ENCODE measurements at regions of chr10 and their contacts with region 1.

Region 1: DNA sequence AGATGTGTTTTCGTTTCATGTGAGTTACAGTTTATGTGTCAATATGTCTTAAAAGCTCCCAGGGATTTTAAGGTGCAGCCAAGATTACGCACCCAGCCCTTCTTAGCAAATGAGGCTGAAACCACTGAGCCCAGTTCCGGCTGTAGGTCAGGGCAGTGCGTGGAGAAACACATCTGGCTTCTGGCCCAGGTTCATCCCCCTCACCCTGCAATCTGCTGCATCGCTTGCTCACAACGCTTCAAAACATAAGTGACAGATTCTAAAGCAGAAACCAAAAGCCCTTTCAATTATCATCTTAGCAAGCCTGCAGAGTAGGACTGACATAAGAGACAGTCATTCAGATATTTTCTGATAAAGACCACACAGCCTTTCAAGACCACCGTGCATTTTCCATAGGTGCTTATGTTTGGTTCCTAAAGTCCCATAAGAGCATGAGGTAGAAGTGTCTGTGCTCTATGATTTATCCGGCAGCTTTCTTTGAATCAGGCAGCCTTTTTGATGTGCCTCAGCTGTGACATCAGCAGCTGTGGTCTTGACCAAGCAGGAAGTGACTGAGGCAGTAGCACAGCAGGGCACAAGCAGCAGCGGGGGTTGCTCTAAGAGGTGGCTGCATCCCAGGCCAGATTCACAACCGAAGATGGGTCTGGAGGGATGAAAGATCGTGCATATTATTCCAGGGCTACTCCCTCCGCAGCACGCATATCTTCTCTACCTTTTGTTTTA is 72.1 kb upstream of the LYZL2 start:
- DNase-seq: peak; percentile 94
- H3K4me3 Mint-ChIP-seq: peak overlapping the region; percentile 57
- H3K27ac Mint-ChIP-seq: peak overlapping the region; percentile 98
- H3K4me1 Mint-ChIP-seq: peaks cover 90% of the 10 kb centered on the region
- H3K27me3 Mint-ChIP-seq: no peaks in the 10 kb centered on the region

Region 2: DNA sequence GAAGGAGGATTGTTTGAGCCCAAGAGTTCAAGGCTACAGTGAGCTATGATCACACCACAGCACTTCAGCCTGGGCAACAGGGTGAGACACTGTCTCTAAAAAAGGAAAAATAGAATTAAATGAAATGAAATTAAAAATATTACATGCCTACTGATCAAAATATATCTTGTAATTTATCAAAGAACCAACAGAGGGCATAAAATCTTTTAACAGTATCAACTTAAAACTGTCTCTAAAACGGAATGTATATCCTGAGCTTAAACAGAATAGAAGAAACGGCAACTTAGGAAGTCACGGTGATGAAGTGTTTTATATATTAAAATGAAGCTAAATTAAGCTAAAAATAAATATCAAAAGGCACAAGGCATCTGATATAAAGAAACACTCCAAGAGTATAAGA is 431.4 kb before region 1 on chr10:
- CTCF ChIA-PET with region 1: no interaction called
- POLR2A ChIA-PET with region 1: no interaction called
- intact Hi-C with region 1: no loop called
- DNase-seq: no peak
- H3K4me3 Mint-ChIP-seq: no peak overlapping the region
- H3K27ac Mint-ChIP-seq: no peak overlapping the region
- H3K4me1 Mint-ChIP-seq: no peaks in the 10 kb centered on the region
- H3K27me3 Mint-ChIP-seq: peaks cover 15% of the 10 kb centered on the region

Region 3: DNA sequence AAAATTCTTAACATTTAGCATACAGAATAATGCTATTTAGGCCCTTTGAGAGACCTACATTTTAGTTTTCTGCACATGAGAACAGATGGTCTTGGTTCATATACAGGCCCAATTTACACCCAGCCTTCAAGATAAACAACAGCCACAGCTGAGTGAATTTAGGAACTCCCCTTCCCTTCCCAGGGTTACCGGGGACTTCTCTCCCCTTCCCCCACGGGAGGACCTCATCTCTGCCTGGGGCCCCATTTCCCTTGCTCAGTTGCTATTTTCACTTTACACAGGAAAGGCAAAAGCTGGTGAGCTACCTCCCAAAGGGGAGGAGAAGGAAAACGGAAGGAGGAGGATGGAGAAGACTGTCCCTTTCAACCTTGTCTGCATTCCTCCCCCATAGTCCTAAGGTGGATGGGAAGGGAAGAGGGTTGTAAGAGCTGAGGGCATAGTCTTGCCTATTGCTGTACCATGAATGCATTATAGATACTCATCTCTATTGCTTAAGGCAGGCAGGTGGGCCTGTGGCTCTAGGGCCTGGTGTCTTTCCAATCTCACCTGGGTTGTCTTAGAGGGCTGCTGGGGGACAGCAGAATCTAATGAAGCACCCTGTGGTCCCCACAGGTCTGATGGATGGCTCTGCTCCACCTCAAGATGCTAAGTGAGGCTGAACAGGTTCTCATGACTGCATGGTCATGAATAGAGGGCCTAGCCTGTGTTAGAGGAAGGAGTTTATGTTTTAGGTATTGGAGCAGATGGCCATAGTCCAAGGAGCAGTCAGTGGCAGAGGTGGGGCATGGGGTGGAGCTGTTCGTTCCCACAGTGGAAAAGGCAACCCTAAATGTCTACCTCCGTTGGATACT is 273.9 kb before region 1 on chr10:
- CTCF ChIA-PET with region 1: no interaction called
- POLR2A ChIA-PET with region 1: no interaction called
- intact Hi-C with region 1: loop called (anchors 2 kb)
- DNase-seq: peak; percentile 28
- H3K4me3 Mint-ChIP-seq: no peak overlapping the region
- H3K27ac Mint-ChIP-seq: no peak overlapping the region
- H3K4me1 Mint-ChIP-seq: peaks cover 24% of the 10 kb centered on the region
- H3K27me3 Mint-ChIP-seq: no peaks in the 10 kb centered on the region

Region 4: GRCh38 chr10:30583778-30584415 is 117.7 kb before region 1 on chr10:
- CTCF ChIA-PET with region 1: no interaction called
- POLR2A ChIA-PET with region 1: no interaction called
- intact Hi-C with region 1: no loop called
- DNase-seq: peak; percentile 9
- H3K4me3 Mint-ChIP-seq: no peak overlapping the region
- H3K27ac Mint-ChIP-seq: no peak overlapping the region
- H3K4me1 Mint-ChIP-seq: peaks cover 5% of the 10 kb centered on the region
- H3K27me3 Mint-ChIP-seq: peaks cover 3% of the 10 kb centered on the region

Region 5: GRCh38 chr10:30639946-30640786 is 61.4 kb before region 1 on chr10:
- CTCF ChIA-PET with region 1: interaction called, 11 read pairs
- POLR2A ChIA-PET with region 1: no interaction called
- intact Hi-C with region 1: no loop called
- DNase-seq: no peak
- H3K4me3 Mint-ChIP-seq: no peak overlapping the region
- H3K27ac Mint-ChIP-seq: no peak overlapping the region
- H3K4me1 Mint-ChIP-seq: peaks cover 10% of the 10 kb centered on the region
- H3K27me3 Mint-ChIP-seq: peaks cover 42% of the 10 kb centered on the region

Region 6: DNA sequence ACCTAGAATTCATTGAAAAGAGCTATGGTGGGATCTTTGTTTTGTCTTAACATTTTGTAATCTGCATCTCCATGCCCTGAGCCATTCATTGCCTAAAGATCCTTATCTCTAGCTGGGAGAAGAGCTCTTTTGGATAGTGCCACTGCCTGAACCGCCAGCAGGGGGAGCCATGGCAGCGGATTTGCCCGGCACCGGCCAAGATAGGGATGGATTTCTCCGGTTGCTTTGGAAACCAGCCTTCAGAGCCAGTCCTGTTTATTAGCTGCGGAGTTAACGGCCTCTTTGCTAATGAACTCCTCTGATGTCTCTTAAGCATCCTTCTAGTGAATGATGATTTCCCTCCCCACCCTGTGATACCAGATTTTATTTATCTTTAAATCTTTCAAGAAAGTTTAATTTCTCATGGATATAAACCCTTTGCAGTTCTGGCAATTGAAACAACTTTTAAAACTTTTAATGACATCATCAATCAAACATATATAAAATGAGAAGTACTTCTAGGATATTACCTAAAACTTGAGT is 13.9 kb before region 1 on chr10:
- CTCF ChIA-PET with region 1: interaction called, 69 read pairs
- POLR2A ChIA-PET with region 1: interaction called, 49 read pairs
- intact Hi-C with region 1: loop called (anchors 1 kb)
- DNase-seq: peak; percentile 89
- H3K4me3 Mint-ChIP-seq: no peak overlapping the region
- H3K27ac Mint-ChIP-seq: peak overlapping the region; percentile 78
- H3K4me1 Mint-ChIP-seq: peaks cover 71% of the 10 kb centered on the region
- H3K27me3 Mint-ChIP-seq: peaks cover 7% of the 10 kb centered on the region

Region 7: DNA sequence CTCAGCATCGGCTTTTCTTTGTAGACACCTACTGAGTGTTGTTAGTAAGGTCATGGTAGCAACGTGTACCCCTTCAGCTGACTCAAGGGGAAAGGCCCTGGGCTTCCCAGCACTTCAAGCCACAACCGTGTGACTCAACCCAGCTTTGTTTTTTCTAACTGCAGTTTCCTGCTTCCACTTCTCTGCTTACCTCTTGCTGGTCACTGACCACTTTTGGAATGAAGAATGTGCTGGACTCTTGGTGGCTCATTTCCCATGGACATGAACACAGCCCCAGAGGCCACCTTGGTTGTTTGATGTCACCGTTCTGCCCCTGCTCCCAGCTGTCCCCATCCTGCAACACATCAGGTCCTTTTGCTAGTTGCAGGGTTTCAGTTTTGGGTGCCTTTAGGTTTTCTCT is 399.5 kb after region 1 on chr10:
- CTCF ChIA-PET with region 1: no interaction called
- POLR2A ChIA-PET with region 1: no interaction called
- intact Hi-C with region 1: loop called (anchors 2 kb)
- DNase-seq: peak; percentile 89
- H3K4me3 Mint-ChIP-seq: peak overlapping the region; percentile 8
- H3K27ac Mint-ChIP-seq: peak overlapping the region; percentile 92
- H3K4me1 Mint-ChIP-seq: peaks cover 48% of the 10 kb centered on the region
- H3K27me3 Mint-ChIP-seq: no peaks in the 10 kb centered on the region

Region 8: DNA sequence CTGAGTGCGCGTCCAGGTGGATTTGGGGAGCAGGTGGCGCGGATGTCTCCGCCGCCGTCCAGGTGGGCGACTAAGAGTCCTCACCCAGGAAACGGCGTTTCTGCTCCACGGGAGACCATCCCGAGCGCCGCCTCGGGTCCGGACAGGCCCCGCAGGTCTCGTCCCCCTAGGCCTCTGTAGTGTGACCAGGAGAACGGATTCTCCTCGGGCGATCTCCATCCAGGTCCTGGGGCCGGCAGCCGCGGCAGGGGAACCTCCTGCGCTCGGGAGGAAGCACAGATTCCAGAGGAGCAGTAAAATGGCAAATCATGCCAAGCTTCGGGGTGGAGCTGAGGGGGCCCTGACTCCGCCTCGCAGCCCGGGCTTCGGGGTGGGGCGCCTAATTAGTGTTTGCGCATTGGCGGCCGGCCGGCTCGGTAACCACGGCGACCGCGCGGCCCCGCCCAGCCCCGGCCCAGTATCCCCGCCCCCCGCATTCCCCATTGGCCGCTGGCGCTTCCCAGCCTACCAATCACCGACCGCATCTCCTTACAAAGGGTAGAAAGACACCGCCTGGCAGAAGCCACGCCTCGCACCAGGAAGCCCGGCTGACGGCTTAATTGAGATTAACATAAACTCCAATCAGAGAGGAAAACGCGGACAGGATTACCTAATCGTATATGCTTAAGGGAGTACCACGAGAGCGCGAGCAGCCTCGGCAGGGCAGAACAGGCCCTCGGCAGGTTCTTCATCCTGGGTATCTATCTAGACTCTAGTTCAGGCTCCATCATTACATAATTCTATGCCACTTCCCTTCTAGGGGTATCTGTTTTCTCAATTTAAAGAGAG is 1058.4 kb after region 1 on chr10:
- CTCF ChIA-PET with region 1: no interaction called
- POLR2A ChIA-PET with region 1: no interaction called
- intact Hi-C with region 1: loop called (anchors 10 kb)
- DNase-seq: peak; percentile 97
- H3K4me3 Mint-ChIP-seq: peak overlapping the region; percentile 96
- H3K27ac Mint-ChIP-seq: peak overlapping the region; percentile 91
- H3K4me1 Mint-ChIP-seq: peaks cover 10% of the 10 kb centered on the region
- H3K27me3 Mint-ChIP-seq: no peaks in the 10 kb centered on the region

Measured in activated CD4-positive, alpha-beta memory T cell treated with anti-CD3 and anti-CD28 coated beads for 36 hours (primary cell).